ENCODE measurements at regions of chr1 and their contacts with region 1.

Region 1: GRCh38 chr1:220164116-220164515 is 70.2 kb downstream of the IARS2 start:
- H3K4me3 Mint-ChIP-seq: no peak overlapping the region
- H3K27ac Mint-ChIP-seq: no peak overlapping the region
- H3K4me1 Mint-ChIP-seq: no peaks in the 10 kb centered on the region
- H3K27me3 Mint-ChIP-seq: no peaks in the 10 kb centered on the region

Region 2: DNA sequence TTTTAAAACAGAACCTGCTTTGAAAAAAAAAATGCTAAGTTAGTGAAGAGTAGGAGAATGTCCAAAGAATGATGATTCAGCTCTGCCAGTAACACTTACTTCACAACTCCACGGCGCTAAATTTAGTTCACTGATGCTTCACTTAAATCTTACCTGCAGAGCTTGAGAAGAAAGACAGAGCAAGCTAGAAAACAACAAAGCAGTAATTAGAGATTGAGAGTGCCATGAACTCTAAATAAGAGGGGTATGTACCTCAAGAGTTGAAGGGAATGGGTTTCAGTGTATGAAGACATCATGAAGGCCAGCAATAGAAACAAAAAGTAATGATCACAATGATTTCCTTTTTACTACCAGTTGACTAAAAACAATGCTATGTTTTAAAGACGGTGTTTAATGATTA is 150.6 kb before region 1 on chr1:
- intact Hi-C with region 1: loop called (anchors 10 kb)
- H3K4me3 Mint-ChIP-seq: no peak overlapping the region
- H3K27ac Mint-ChIP-seq: no peak overlapping the region
- H3K4me1 Mint-ChIP-seq: no peaks in the 10 kb centered on the region
- H3K27me3 Mint-ChIP-seq: no peaks in the 10 kb centered on the region

Region 3: GRCh38 chr1:220076861-220077762 is 87.0 kb before region 1 on chr1:
- intact Hi-C with region 1: no loop called
- H3K4me3 Mint-ChIP-seq: no peak overlapping the region
- H3K27ac Mint-ChIP-seq: no peak overlapping the region
- H3K4me1 Mint-ChIP-seq: no peaks in the 10 kb centered on the region
- H3K27me3 Mint-ChIP-seq: no peaks in the 10 kb centered on the region

Region 4: GRCh38 chr1:220217383-220217988 is 53.4 kb after region 1 on chr1:
- intact Hi-C with region 1: no loop called
- H3K4me3 Mint-ChIP-seq: no peak overlapping the region
- H3K27ac Mint-ChIP-seq: no peak overlapping the region
- H3K4me1 Mint-ChIP-seq: peaks cover 6% of the 10 kb centered on the region
- H3K27me3 Mint-ChIP-seq: no peaks in the 10 kb centered on the region

Measured in dendritic cell treated with granulocyte-macrophage colony-stimulating factor and Interleukin-4, amounts not matched to agents 40 ng/mL and 50 ng/mL, for 4 days (primary cell).